Heart left ventricle (tissue), 16 donors: ENCODE measurements at regions of chrX and their contacts with region 1.

Region 1: DNA sequence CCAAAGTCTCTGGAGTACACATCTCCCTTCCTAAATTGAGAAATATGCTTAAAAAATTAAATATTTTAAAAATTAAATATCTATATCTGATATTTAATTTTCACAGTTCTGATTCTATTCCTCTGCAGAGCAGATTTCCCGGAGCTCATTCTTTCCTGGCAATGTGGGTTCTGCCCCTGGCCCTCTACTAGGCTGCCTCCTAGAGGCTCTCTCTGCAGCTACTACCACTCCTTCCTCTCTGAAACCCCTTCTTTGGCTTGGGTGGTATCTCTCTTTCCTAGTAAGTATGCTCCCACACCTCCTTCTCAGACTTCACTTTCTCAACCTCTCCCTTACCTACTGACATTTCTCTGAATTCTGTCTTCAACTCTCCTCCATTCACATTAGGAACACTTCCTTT is 45.3 kb downstream of the RPGR start:
- DNase-seq: peak in 1 of 5 donors; percentile 27
- ATAC-seq: peak; percentile 66 to 84 (median 72)
- H3K4me3 ChIP-seq: no peak overlapping the region
- H3K27ac ChIP-seq: no peak overlapping the region
- H3K4me1 ChIP-seq: no peaks in the 10 kb centered on the region
- H3K27me3 ChIP-seq: peaks cover 0 to 17% (median 0%) of the 10 kb centered on the region in 9 donors
- CTCF ChIP-seq: peak in 11 of 12 donors; percentile 18 to 58 (median 43)
- POLR2A ChIP-seq: no peak

Region 2: DNA sequence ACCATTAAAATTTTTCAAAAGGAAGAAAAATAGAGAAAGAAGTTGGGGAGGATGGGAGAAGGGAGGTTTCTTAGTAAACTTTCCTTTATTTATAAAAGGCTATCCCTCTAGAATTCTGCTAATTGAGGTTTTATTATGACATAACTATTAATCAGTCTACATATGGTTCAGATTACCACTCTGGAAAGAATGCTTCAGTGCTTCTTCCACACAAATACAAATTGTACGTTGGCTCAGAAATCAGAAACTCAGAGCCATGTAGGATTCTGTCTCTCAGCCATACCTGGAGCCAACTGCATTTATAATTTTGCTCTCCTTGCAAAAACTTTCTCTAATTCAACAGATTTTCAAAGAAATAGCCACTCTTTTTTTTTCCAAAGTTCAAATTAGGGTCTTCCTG is 98.4 kb before region 1 on chrX:
- intact Hi-C with region 1: loop called in 1 of 10 experiments (anchors 10 kb)
- DNase-seq: no peak
- ATAC-seq: no peak
- H3K4me3 ChIP-seq: no peak overlapping the region
- H3K27ac ChIP-seq: no peak overlapping the region
- H3K4me1 ChIP-seq: peaks cover 0 to 3% (median 0%) of the 10 kb centered on the region in 12 donors
- H3K27me3 ChIP-seq: peaks cover 0 to 13% (median 0%) of the 10 kb centered on the region in 9 donors
- CTCF ChIP-seq: no peak
- POLR2A ChIP-seq: no peak

Region 3: DNA sequence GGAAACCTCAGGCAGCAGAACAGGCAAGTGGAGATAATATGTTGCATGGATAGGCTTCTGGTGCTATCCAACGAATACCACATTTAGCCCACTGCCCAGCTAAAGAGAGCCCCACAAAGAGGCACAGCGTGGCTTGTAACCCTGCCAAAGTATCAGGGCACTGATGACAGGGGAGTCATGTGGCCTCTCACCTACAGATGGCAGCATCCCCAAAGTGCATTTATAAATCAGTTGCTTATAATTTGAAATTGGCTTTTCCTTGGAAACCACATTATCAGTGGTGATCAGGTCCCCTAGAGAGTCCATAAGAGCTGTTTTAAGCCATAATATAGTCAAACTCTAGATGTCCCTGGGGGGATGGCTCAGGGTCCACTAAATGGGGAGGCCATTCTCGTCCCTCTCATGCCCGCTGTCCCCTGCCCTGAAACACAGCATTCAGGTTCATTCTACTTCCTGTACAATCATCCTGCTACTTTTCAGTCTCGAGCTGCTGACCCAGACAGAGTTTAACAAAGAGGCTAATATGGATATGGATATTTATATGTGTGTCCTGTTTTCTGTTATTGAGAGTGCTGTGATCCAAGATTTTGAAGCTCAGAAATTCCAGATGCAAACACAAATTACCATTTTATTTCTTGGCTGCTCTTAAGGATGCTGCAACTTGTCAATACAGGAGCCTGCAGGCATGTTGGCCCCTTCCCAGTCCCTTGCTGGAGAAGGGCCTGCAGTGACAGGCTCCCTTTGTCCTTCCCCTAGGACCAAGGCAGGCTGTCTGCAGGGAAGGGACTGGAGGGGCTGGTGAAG is 89.8 kb before region 1 on chrX:
- intact Hi-C with region 1: loop called in 7 of 10 experiments (anchors 5 to 10 kb)
- DNase-seq: peak in 1 of 5 donors; percentile 38
- ATAC-seq: peak in 2 of 4 donors; percentile 61 to 68
- H3K4me3 ChIP-seq: no peak overlapping the region
- H3K27ac ChIP-seq: no peak overlapping the region
- H3K4me1 ChIP-seq: peaks cover 0 to 5% (median 0%) of the 10 kb centered on the region in 12 donors
- H3K27me3 ChIP-seq: peaks cover 0 to 6% (median 0%) of the 10 kb centered on the region in 9 donors
- CTCF ChIP-seq: peak; percentile 19 to 50 (median 28)
- POLR2A ChIP-seq: no peak